MCF 10A (cell line): ENCODE measurements at regions of chr18 and their contacts with region 1.

Region 1: GRCh38 chr18:48475635-48476549 is 62.9 kb upstream of the CTIF start:
- DNase-seq: peak; percentile 71
- H3K4me3 Mint-ChIP-seq: no peak overlapping the region
- H3K27ac Mint-ChIP-seq: no peak overlapping the region
- H3K4me1 Mint-ChIP-seq: peaks cover 5% of the 10 kb centered on the region
- H3K27me3 Mint-ChIP-seq: peaks cover 16% of the 10 kb centered on the region
- CTCF ChIP-seq: peak; percentile 86

Region 2: GRCh38 chr18:48073231-48073930 is 402.5 kb before region 1 on chr18:
- CTCF ChIA-PET with region 1: no interaction called
- POLR2A ChIA-PET with region 1: no interaction called
- intact Hi-C with region 1: no loop called
- DNase-seq: no peak
- H3K4me3 Mint-ChIP-seq: no peak overlapping the region
- H3K27ac Mint-ChIP-seq: peak overlapping the region; percentile 59
- H3K4me1 Mint-ChIP-seq: peaks cover 16% of the 10 kb centered on the region
- H3K27me3 Mint-ChIP-seq: no peaks in the 10 kb centered on the region
- CTCF ChIP-seq: no peak

Region 3: DNA sequence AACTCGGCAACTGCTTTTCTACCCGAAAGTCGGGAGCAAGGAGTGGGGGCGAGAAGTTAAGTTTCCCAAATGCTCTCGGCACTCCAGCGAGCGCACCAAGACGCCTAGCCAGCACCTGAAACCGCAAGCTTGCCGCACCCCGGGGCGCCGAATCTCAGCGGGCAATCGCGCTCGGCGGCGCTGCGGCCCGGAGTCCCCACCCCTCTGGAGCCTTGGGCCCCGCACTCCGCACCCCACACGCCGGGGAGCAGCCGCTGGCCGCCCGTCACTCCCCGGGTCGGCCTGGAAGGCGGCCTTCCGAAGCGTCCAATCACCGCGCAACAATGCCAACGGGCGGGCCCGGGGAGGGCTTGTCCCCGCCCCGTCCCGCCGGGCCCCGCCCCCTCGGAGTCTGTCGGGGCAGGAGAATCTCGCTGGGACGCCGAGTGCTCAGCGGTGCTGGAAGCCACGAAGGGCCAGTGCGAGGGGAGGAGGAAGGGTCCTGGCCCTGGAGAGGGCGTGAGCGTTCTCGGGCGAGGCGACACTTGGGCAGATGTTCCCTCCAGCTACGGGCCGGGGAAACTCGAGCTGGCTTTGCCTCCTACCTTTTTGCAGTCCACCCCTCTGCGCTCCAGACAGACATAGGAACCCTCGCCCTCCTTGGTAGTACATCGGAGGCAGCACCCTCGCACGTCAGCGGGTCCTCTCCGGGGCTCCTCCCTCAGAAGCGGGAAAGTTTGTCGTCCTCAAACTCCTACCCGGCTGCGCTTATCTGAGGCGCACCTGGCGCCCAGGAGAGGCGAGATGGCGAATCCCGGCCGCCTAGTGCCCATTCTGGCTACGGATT is 65.6 kb before region 1 on chr18:
- CTCF ChIA-PET with region 1: no interaction called
- POLR2A ChIA-PET with region 1: no interaction called
- intact Hi-C with region 1: no loop called
- DNase-seq: peak; percentile 92
- H3K4me3 Mint-ChIP-seq: peak overlapping the region; percentile 75
- H3K27ac Mint-ChIP-seq: no peak overlapping the region
- H3K4me1 Mint-ChIP-seq: peaks cover 2% of the 10 kb centered on the region
- H3K27me3 Mint-ChIP-seq: no peaks in the 10 kb centered on the region
- CTCF ChIP-seq: no peak

Region 4: DNA sequence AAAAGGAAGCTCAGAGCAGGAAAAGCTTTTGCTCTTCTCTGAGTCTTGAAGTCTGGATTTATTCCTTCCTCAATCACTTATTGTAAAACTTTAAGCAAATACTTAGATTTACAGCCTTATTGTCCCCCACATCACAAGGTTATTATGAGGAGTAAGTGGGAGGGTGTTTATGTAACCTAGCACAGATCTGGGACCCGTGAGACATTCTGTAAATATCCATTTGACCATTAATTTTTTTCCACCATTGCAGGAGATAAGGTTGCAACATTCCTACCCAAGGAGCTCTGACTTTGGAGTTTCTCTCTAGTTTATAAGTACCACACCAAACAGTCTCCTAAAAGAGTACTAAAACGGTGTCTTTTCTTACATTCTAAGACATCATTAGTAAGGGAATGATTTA is 10.9 kb after region 1 on chr18:
- CTCF ChIA-PET with region 1: interaction called, 25 read pairs
- POLR2A ChIA-PET with region 1: interaction called, 3 read pairs
- intact Hi-C with region 1: no loop called
- DNase-seq: no peak
- H3K4me3 Mint-ChIP-seq: no peak overlapping the region
- H3K27ac Mint-ChIP-seq: no peak overlapping the region
- H3K4me1 Mint-ChIP-seq: peaks cover 28% of the 10 kb centered on the region
- H3K27me3 Mint-ChIP-seq: no peaks in the 10 kb centered on the region
- CTCF ChIP-seq: no peak

Region 5: DNA sequence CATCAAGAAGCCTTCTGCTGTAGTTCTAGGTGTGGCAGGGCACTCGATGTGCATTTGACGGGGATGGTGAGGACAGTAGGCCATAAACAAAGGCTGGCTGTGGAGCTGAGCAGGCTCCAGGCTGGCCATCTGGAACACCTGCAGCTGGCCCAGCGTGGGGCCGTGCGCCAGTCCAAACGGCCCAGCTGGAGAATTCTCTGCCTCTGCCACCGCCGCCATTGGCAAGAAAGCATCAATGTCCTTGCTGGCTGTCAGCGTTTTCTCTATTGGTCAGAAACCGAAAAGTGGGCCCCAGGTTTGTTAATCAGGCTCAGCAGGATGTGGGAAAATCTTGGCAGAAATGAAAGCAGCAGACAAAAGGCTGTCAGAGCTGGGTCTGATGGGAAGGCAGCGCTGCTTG is 38.9 kb after region 1 on chr18:
- CTCF ChIA-PET with region 1: no interaction called
- POLR2A ChIA-PET with region 1: no interaction called
- intact Hi-C with region 1: no loop called
- DNase-seq: no peak
- H3K4me3 Mint-ChIP-seq: no peak overlapping the region
- H3K27ac Mint-ChIP-seq: no peak overlapping the region
- H3K4me1 Mint-ChIP-seq: no peaks in the 10 kb centered on the region
- H3K27me3 Mint-ChIP-seq: no peaks in the 10 kb centered on the region
- CTCF ChIP-seq: no peak

Region 6: GRCh38 chr18:48538531-48539405 is 62.9 kb after region 1 on chr18 and contains the start of gene CTIF:
- CTCF ChIA-PET with region 1: interaction called, 5 read pairs
- POLR2A ChIA-PET with region 1: interaction called, 3 read pairs
- intact Hi-C with region 1: loop called (anchors 2 kb)
- DNase-seq: peak; percentile 96
- H3K4me3 Mint-ChIP-seq: peak within 1 kb of the TSS; percentile 89
- H3K27ac Mint-ChIP-seq: peak within 1 kb of the TSS; percentile 35
- H3K4me1 Mint-ChIP-seq: no peaks in the 10 kb centered on the region
- H3K27me3 Mint-ChIP-seq: no peaks in the 10 kb centered on the region
- CTCF ChIP-seq: no peak
- total RNA-seq, gene CTIF: 82.2 and 95.8 TPM in 2 replicates

Region 7: GRCh38 chr18:48663931-48664847 is 188.3 kb after region 1 on chr18:
- CTCF ChIA-PET with region 1: interaction called, 99 read pairs
- POLR2A ChIA-PET with region 1: interaction called, 6 read pairs
- intact Hi-C with region 1: loop called (anchors 1 kb)
- DNase-seq: peak; percentile 61
- H3K4me3 Mint-ChIP-seq: no peak overlapping the region
- H3K27ac Mint-ChIP-seq: no peak overlapping the region
- H3K4me1 Mint-ChIP-seq: peaks cover 27% of the 10 kb centered on the region
- H3K27me3 Mint-ChIP-seq: no peaks in the 10 kb centered on the region
- CTCF ChIP-seq: peak; percentile 86